HCT116 (cell line): ENCODE measurements at regions of chr14 and their contacts with region 1.

Region 1: DNA sequence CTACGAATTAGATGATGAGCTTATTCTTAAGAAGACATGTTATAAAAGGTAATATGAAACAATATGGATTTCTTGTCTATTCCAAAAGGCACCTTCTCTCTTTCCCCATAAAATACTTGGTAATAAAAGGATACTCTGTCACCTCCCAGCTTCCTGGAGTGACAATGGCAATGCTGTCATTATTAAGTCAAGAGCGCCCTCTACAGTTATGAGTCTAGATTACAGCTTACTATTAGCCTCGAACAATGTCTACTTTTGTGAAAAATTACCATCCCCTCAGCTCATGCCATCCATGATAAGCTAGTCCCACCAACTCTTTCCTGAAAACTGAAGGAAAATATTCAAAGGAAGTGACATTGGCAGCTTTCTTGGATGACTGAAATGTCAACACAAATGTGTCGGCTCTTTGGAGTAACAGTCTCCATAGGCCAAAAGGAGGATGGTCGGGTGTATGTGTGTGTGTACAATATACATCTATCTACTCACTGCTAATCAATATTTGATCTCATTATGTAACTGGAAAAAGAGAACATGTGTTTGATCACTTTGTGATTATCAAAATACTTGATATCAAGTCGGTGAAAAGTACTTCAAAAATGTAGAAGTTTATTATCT is 48.7 kb upstream of the CDKN3 start:
- DNase-seq: peak; percentile 44
- ATAC-seq: peak; percentile 89
- H3K4me3 ChIP-seq: no peak overlapping the region
- H3K27ac ChIP-seq: no peak overlapping the region
- H3K4me1 ChIP-seq: peaks cover 4 to 14% of the 10 kb centered on the region in 2 experiments; a peak in 2 of 4 replicates
- H3K27me3 ChIP-seq: no peaks in the 10 kb centered on the region
- CTCF ChIP-seq: peak; percentile 51 to 90 (median 81)
- POLR2A ChIP-seq: no peak
- RAD21 ChIP-seq: peak; percentile 89

Region 2: GRCh38 chr14:53306267-53306721 is 1041.8 kb before region 1 on chr14:
- CTCF ChIA-PET with region 1: interaction called, 12 read pairs
- POLR2A ChIA-PET with region 1: no interaction called
- RAD21 ChIA-PET with region 1: no interaction called
- intact Hi-C with region 1: no loop called
- DNase-seq: peak; percentile 28
- ATAC-seq: peak; percentile 86
- H3K4me3 ChIP-seq: no peak overlapping the region
- H3K27ac ChIP-seq: no peak overlapping the region
- H3K4me1 ChIP-seq: peaks cover 0 to 5% of the 10 kb centered on the region in 2 experiments; a peak in 1 of 4 replicates
- H3K27me3 ChIP-seq: no peaks in the 10 kb centered on the region
- CTCF ChIP-seq: peak; percentile 59 to 86 (median 64)
- POLR2A ChIP-seq: no peak
- RAD21 ChIP-seq: peak; percentile 89

Region 3: DNA sequence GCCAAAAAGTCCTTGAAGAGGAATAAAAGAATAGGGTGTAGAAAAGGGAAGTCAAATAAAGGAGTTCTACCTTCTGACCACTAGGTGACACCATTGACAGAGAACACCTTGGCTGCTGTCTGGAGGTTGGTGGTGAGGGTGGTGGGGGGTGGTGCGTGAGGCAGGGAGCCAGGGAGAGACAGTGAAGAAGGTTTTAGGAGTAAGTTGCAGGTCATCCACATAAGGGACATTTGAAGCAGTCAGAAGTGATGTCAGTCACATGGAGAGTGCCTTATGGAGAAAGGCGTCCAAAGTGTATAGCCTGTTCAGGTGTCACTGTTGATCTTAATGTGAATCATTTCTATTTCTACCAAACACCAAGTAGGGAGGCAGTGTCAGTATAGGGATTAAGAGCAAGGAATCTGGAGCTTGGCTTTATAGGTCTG is 915.7 kb before region 1 on chr14:
- CTCF ChIA-PET with region 1: interaction called, 10 read pairs
- POLR2A ChIA-PET with region 1: no interaction called
- RAD21 ChIA-PET with region 1: no interaction called
- intact Hi-C with region 1: loop called (anchors 5 kb)
- DNase-seq: peak; percentile 40
- ATAC-seq: peak; percentile 99
- H3K4me3 ChIP-seq: no peak overlapping the region
- H3K27ac ChIP-seq: peak overlapping the region; percentile 33; the same call in 1 of the 2 replicates
- H3K4me1 ChIP-seq: peaks cover 9 to 24% of the 10 kb centered on the region in 2 experiments; a peak in 3 of 4 replicates
- H3K27me3 ChIP-seq: no peaks in the 10 kb centered on the region
- CTCF ChIP-seq: peak; percentile 43 to 84 (median 66); a peak in 5 of 6 replicates
- POLR2A ChIP-seq: no peak
- RAD21 ChIP-seq: peak; percentile 81

Region 4: GRCh38 chr14:53663709-53664108 is 684.4 kb before region 1 on chr14:
- CTCF ChIA-PET with region 1: no interaction called
- POLR2A ChIA-PET with region 1: no interaction called
- RAD21 ChIA-PET with region 1: no interaction called
- intact Hi-C with region 1: loop called (anchors 10 kb)
- DNase-seq: peak; percentile 47
- ATAC-seq: peak; percentile 98
- H3K4me3 ChIP-seq: no peak overlapping the region
- H3K27ac ChIP-seq: no peak overlapping the region
- H3K4me1 ChIP-seq: peaks cover 3 to 8% of the 10 kb centered on the region in 2 experiments; a peak in 2 of 4 replicates
- H3K27me3 ChIP-seq: no peaks in the 10 kb centered on the region
- CTCF ChIP-seq: peak; percentile 38 to 63 (median 61); a peak in 5 of 6 replicates
- POLR2A ChIP-seq: no peak
- RAD21 ChIP-seq: peak; percentile 66